ENCODE measurements at regions of chr19 and their contacts with region 1.

Region 1: DNA sequence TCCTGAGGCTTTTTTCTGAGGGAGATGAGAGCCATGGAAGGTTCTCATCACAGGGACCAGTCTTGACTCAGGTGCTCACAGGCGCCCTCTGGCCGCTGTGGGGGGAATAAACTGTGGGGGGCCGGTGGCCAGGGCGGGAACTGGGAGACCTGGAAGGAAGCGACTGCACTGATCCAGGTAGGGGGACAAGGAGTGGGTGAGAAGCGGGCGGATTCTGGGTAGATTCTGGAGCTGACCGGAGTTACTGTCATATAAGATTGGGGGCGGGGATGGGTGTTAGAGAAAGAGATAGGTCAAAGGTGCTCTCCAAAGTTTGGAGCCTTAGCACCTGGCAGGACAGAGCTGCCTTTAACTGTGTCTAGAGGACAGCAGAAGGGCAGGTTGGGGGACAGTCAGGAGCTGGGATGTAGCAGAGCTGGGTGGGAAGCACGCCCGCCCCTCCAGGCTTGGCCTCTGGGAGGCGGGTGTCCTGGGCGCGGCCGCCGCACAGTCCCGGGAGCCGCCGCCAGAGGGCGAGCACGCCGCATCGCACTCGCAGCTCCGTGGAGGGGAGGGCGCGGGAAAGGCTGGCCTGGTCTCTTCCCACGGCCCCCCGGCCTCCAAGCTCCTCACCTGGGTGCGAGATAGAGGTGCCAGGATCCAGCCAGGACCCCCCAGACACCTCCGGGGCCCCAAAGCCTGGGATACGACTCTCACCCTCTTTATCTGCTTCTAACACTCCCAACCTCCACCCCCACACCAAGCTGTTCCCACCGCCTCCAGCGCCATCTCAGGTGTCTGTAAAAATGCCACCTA is 4.2 kb upstream of the DAND5 start:
- DNase-seq: peak; percentile 85
- H3K4me3 ChIP-seq: peak overlapping the region; percentile 65
- H3K27ac ChIP-seq: peak overlapping the region; percentile 54
- H3K4me1 ChIP-seq: peaks cover 6% of the 10 kb centered on the region
- CTCF ChIP-seq: peak; percentile 95

Region 2: DNA sequence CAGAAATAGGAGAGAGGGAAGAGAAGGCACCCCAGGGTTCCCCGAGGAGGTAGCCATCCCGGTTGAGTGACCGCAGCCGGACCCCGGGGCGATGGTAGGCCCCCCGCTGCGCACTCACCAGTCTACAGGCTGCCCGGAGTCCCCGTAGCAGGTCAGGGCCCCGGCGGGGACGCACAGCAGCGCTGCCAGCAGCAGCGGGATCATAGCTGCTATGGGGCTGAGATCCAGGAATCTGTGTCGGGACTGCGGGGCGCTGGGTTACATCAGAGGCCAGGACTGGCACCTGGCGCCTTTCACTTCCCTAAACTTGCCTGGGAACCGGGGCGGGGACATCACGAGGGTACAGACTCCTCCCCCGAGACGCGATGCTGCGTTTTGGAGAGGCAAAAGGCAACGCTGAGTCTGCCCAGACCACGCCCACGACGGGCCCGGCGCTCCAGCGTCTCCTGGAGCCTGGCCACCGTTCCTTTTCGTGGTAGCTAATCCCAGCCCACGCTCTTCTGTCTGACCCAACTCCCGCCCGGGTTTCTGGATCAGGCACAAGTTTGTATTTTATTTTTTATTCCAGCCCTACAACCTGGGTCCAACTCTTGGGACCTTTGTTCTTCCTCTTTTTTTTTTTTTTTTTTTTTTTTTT is 83.9 kb before region 1 on chr19 and contains the start of gene DNASE2:
- CTCF ChIA-PET with region 1: no interaction called
- POLR2A ChIA-PET with region 1: no interaction called
- intact Hi-C with region 1: loop called (anchors 1 kb)
- DNase-seq: peak; percentile 99
- H3K4me3 ChIP-seq: peak within 1 kb of the TSS; percentile 87
- H3K27ac ChIP-seq: peak within 1 kb of the TSS; percentile 76
- H3K4me1 ChIP-seq: peaks cover 26% of the 10 kb centered on the region
- CTCF ChIP-seq: no peak
- total RNA-seq, gene DNASE2: 28.3 and 32.4 TPM in 2 replicates